Tibial artery (tissue), 4 donors: ENCODE measurements at regions of chr15 and their contacts with region 1.

Region 1: DNA sequence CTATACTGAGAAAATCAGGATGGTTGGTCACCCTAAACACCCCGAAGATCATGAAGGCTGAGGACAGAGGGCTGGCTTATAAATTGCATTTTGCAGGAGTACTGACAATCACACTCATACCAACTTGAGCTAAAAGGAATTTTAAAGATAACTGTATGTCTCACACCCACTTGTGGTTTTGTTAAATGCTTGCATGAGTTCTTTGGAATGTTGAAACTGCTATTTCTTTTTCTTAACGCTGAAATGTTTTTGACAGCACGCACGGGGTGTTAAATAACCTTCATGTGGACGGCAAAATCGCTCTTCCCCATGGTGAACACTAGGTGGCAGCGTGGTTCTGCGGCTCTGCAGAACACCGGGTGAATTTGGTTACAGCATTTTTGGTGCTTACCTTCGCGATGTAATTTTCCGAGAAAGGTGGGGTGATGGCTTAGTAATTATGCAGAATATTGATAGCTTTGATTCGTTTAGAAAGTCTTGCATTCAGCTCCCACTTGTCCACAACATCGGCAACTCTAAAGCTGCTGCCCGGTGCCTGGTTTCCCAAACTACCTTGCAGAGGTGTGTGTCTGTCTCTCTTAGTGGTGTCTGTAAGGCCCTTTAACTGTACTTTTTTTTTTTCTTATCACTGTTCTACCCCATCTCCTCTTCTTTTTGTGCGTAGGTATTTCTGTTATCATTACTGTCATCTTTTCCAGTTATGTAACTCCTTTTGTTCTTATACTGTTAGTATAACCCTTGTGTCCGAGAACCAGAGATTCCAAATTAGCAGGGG is 51.7 kb downstream of the ARNT2 start:
- DNase-seq: peak in 1 of 2 donors; percentile 40
- H3K4me3 ChIP-seq: no peak overlapping the region
- H3K27ac ChIP-seq: no peak overlapping the region
- H3K4me1 ChIP-seq: peaks cover 0 to 11% (median 3%) of the 10 kb centered on the region in 4 donors
- H3K27me3 ChIP-seq: no peaks in the 10 kb centered on the region
- CTCF ChIP-seq: peak; percentile 92 to 95

Region 2: GRCh38 chr15:80567721-80568157 is 111.9 kb after region 1 on chr15:
- intact Hi-C with region 1: loop called (anchors 10 kb)
- DNase-seq: peak in 1 of 2 donors; percentile 56
- H3K4me3 ChIP-seq: no peak overlapping the region
- H3K27ac ChIP-seq: no peak overlapping the region
- H3K4me1 ChIP-seq: peaks cover 0 to 5% (median 0%) of the 10 kb centered on the region in 4 donors
- H3K27me3 ChIP-seq: no peaks in the 10 kb centered on the region
- CTCF ChIP-seq: peak; percentile 61 to 66